Breast epithelium (tissue), 4 donors: ENCODE measurements at regions of chr12 and their contacts with region 1.

Region 1: GRCh38 chr12:6380141-6381121 is 3.5 kb upstream of the LTBR start:
- DNase-seq: peak in 1 of 2 donors; percentile 78
- H3K4me3 ChIP-seq: no peak overlapping the region
- H3K27ac ChIP-seq: peak overlapping the region; percentile 48 to 58
- H3K4me1 ChIP-seq: peaks cover 22 to 29% of the 10 kb centered on the region in 2 donors
- H3K27me3 ChIP-seq: no peaks in the 10 kb centered on the region
- CTCF ChIP-seq: no peak
- POLR2A ChIP-seq: no peak

Region 2: GRCh38 chr12:6324936-6325750 is 55.3 kb before region 1 on chr12:
- intact Hi-C with region 1: loop called (anchors 2 kb)
- DNase-seq: no peak
- H3K4me3 ChIP-seq: no peak overlapping the region
- H3K27ac ChIP-seq: peak overlapping the region; percentile 91 to 92
- H3K4me1 ChIP-seq: peaks cover 13 to 16% of the 10 kb centered on the region in 2 donors
- H3K27me3 ChIP-seq: no peaks in the 10 kb centered on the region
- CTCF ChIP-seq: no peak
- POLR2A ChIP-seq: no peak

Region 3: DNA sequence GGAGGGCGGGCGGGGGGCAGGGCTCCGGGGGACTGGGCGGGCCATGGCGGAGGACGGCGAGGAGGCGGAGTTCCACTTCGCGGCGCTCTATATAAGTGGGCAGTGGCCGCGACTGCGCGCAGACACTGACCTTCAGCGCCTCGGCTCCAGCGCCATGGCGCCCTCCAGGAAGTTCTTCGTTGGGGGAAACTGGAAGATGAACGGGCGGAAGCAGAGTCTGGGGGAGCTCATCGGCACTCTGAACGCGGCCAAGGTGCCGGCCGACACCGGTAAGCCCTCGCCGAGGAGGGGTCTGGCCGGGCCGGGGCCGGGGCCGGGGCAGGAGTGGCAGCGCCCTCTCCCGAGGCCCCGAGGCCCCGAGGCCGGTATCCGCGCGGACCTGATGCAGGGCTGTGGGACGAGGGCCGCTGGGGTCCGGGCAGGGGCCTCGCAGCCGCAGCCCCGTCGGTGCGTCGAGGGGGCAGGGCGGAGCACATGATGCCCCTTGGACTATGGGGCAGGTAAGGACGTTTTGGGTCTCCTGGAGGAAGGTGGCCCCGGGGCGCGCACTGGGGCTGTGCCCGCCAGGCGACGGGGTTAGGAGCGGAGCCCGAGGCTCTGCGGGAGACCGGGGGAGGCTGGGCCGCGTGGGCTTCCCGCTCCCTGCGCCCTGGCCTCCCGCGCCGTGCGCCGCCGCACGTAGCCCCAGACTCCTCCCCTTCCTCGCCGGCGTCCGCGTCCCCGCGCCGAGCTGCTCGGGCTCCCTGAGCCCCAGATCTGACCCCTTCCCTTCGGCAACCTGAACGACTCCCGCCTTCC is 487.2 kb after region 1 on chr12 and contains the start of gene TPI1:
- intact Hi-C with region 1: no loop called
- DNase-seq: peak; percentile 68 to 90
- H3K4me3 ChIP-seq: peak within 1 kb of the TSS; percentile 90 to 100 (median 94)
- H3K27ac ChIP-seq: peak within 1 kb of the TSS; percentile 95 to 96
- H3K4me1 ChIP-seq: peaks cover 5 to 27% of the 10 kb centered on the region in 2 donors
- H3K27me3 ChIP-seq: no peaks in the 10 kb centered on the region
- CTCF ChIP-seq: peak in 1 of 3 donors; percentile 12
- POLR2A ChIP-seq: peak; percentile 94
- total RNA-seq, gene TPI1: 297 to 386 (median 351) TPM